Caco-2 (cell line): ENCODE measurements at regions of chr11 and their contacts with region 1.

Region 1: DNA sequence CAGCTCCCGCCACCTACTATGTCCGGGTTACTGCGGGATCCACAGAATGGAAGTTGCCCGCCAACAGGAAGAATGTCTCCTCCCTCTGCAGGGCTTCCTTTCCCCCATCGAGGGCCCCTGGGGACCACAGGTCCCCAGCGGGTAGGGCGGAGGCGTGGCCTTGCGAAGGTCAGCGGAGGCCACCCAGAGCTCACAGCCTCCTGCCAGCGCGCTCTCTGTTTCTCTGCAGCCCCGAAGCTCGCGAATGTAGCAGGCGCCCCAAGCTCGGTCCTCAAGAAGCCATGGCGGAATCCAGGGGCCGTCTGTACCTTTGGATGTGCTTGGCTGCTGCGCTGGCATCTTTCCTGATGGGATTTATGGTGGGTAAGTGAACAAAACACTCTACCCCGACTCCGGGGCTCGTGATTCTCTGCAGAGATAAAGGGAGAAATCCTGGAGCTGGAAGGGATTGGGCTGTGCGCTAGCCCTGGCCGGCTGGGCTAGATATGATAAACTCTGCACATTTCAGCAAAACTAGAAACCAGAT is at the start of gene NAALAD2:
- DNase-seq: peak; percentile 90 to 93
- H3K4me3 ChIP-seq: peak within 1 kb of the TSS; percentile 50
- H3K4me3 Mint-ChIP-seq: peak within 1 kb of the TSS; percentile 77
- H3K27ac Mint-ChIP-seq: peak within 1 kb of the TSS; percentile 59
- H3K4me1 ChIP-seq: peaks cover 53% of the 10 kb centered on the region
- H3K4me1 Mint-ChIP-seq: peaks cover 31% of the 10 kb centered on the region
- H3K27me3 ChIP-seq: no peaks in the 10 kb centered on the region
- H3K27me3 Mint-ChIP-seq: no peaks in the 10 kb centered on the region
- CTCF ChIP-seq: no peak
- total RNA-seq, gene NAALAD2: 139 and 142 TPM in 2 replicates

Region 2: GRCh38 chr11:90124371-90124770 is 10.2 kb before region 1 on chr11:
- CTCF ChIA-PET with region 1: no interaction called
- POLR2A ChIA-PET with region 1: no interaction called
- intact Hi-C with region 1: loop called (anchors 1 kb)
- DNase-seq: no peak
- H3K4me3 ChIP-seq: no peak overlapping the region
- H3K4me3 Mint-ChIP-seq: no peak overlapping the region
- H3K27ac Mint-ChIP-seq: no peak overlapping the region
- H3K4me1 ChIP-seq: peaks cover 20% of the 10 kb centered on the region
- H3K4me1 Mint-ChIP-seq: peaks cover 15% of the 10 kb centered on the region
- H3K27me3 ChIP-seq: no peaks in the 10 kb centered on the region
- H3K27me3 Mint-ChIP-seq: no peaks in the 10 kb centered on the region
- CTCF ChIP-seq: no peak

Region 3: GRCh38 chr11:90148900-90149299 is 14.4 kb after region 1 on chr11:
- CTCF ChIA-PET with region 1: interaction called, 3 read pairs
- POLR2A ChIA-PET with region 1: no interaction called
- intact Hi-C with region 1: loop called (anchors 1 kb)
- DNase-seq: no peak
- H3K4me3 ChIP-seq: no peak overlapping the region
- H3K4me3 Mint-ChIP-seq: no peak overlapping the region
- H3K27ac Mint-ChIP-seq: no peak overlapping the region
- H3K4me1 ChIP-seq: 0 out of 2 replicates have a peak, but pooled peaks cover 8% of the 10 kb centered on the region
- H3K4me1 Mint-ChIP-seq: peaks cover 26% of the 10 kb centered on the region
- H3K27me3 ChIP-seq: no peaks in the 10 kb centered on the region
- H3K27me3 Mint-ChIP-seq: no peaks in the 10 kb centered on the region
- CTCF ChIP-seq: peak in 1 of 2 experiments; percentile 39

Region 4: GRCh38 chr11:90171359-90171758 is 36.8 kb after region 1 on chr11:
- CTCF ChIA-PET with region 1: no interaction called
- POLR2A ChIA-PET with region 1: interaction called, 7 read pairs
- intact Hi-C with region 1: loop called (anchors 1 kb)
- DNase-seq: peak; percentile 83 to 90
- H3K4me3 ChIP-seq: no peak overlapping the region
- H3K4me3 Mint-ChIP-seq: peak overlapping the region; percentile 30
- H3K27ac Mint-ChIP-seq: peak overlapping the region; percentile 91
- H3K4me1 ChIP-seq: peaks cover 72% of the 10 kb centered on the region
- H3K4me1 Mint-ChIP-seq: peaks cover 28% of the 10 kb centered on the region
- H3K27me3 ChIP-seq: no peaks in the 10 kb centered on the region
- H3K27me3 Mint-ChIP-seq: no peaks in the 10 kb centered on the region
- CTCF ChIP-seq: no peak

Region 5: GRCh38 chr11:90192869-90193582 is 58.5 kb after region 1 on chr11:
- CTCF ChIA-PET with region 1: no interaction called
- POLR2A ChIA-PET with region 1: no interaction called
- intact Hi-C with region 1: loop called (anchors 2 kb)
- DNase-seq: no peak
- H3K4me3 ChIP-seq: no peak overlapping the region
- H3K4me3 Mint-ChIP-seq: no peak overlapping the region
- H3K27ac Mint-ChIP-seq: no peak overlapping the region
- H3K4me1 ChIP-seq: peaks cover 26% of the 10 kb centered on the region
- H3K4me1 Mint-ChIP-seq: peaks cover 33% of the 10 kb centered on the region
- H3K27me3 ChIP-seq: no peaks in the 10 kb centered on the region
- H3K27me3 Mint-ChIP-seq: no peaks in the 10 kb centered on the region
- CTCF ChIP-seq: no peak

Region 6: GRCh38 chr11:90220391-90220790 is 85.8 kb after region 1 on chr11:
- CTCF ChIA-PET with region 1: no interaction called
- POLR2A ChIA-PET with region 1: no interaction called
- intact Hi-C with region 1: no loop called
- DNase-seq: no peak
- H3K4me3 ChIP-seq: peak overlapping the region; percentile 79
- H3K4me3 Mint-ChIP-seq: peak overlapping the region; percentile 98
- H3K27ac Mint-ChIP-seq: no peak overlapping the region
- H3K4me1 ChIP-seq: peaks cover 34% of the 10 kb centered on the region
- H3K4me1 Mint-ChIP-seq: peaks cover 36% of the 10 kb centered on the region
- H3K27me3 ChIP-seq: no peaks in the 10 kb centered on the region
- H3K27me3 Mint-ChIP-seq: no peaks in the 10 kb centered on the region
- CTCF ChIP-seq: no peak

Region 7: DNA sequence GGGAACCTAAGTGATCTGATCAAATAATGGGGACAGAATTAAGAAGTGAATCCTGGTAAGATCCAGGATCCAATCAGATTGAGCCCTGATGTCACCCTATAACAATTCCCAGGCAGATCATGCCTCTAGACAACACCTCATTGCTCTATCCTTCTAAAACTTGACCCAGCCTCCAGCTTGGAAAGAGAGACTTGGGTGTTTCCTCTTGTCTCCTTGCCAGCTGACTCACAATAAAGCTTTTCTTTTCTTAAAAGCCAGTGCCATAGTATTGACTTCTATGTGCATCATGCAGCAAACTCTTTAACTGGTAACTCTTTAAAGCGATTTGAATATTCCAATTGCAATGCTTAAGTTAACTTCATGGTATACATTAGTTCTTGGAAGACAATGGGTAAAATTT is 197.9 kb after region 1 on chr11:
- CTCF ChIA-PET with region 1: no interaction called
- POLR2A ChIA-PET with region 1: no interaction called
- intact Hi-C with region 1: no loop called
- DNase-seq: no peak
- H3K4me3 ChIP-seq: no peak overlapping the region
- H3K4me3 Mint-ChIP-seq: no peak overlapping the region
- H3K27ac Mint-ChIP-seq: no peak overlapping the region
- H3K4me1 ChIP-seq: peaks cover 7% of the 10 kb centered on the region; the same call in 1 of the 2 replicates
- H3K4me1 Mint-ChIP-seq: peaks cover 13% of the 10 kb centered on the region
- H3K27me3 ChIP-seq: no peaks in the 10 kb centered on the region
- H3K27me3 Mint-ChIP-seq: no peaks in the 10 kb centered on the region
- CTCF ChIP-seq: no peak

Region 8: DNA sequence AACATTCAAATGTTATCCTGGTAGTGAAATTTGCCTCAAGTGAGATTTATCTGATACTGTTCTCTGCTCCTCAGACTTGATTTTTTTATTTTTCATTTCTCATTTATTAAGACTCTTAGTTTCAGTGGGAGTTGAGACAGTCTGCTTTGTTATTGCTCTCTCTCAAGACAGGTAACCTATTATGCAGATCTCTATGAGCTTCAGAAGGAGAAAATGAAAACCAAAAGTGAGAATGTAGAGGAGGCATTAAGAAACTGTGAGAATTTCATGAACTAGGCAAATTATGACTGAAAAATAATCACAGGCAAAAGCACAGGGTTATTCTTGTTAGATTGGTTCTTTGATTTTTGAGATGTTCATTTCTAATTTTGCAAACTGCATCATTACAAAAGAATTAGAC is 378.3 kb after region 1 on chr11:
- CTCF ChIA-PET with region 1: no interaction called
- POLR2A ChIA-PET with region 1: no interaction called
- intact Hi-C with region 1: no loop called
- DNase-seq: no peak
- H3K4me3 ChIP-seq: no peak overlapping the region
- H3K4me3 Mint-ChIP-seq: no peak overlapping the region
- H3K27ac Mint-ChIP-seq: no peak overlapping the region
- H3K4me1 ChIP-seq: no peaks in the 10 kb centered on the region
- H3K4me1 Mint-ChIP-seq: no peaks in the 10 kb centered on the region
- H3K27me3 ChIP-seq: no peaks in the 10 kb centered on the region
- H3K27me3 Mint-ChIP-seq: peaks cover 3% of the 10 kb centered on the region
- CTCF ChIP-seq: no peak

Region 9: DNA sequence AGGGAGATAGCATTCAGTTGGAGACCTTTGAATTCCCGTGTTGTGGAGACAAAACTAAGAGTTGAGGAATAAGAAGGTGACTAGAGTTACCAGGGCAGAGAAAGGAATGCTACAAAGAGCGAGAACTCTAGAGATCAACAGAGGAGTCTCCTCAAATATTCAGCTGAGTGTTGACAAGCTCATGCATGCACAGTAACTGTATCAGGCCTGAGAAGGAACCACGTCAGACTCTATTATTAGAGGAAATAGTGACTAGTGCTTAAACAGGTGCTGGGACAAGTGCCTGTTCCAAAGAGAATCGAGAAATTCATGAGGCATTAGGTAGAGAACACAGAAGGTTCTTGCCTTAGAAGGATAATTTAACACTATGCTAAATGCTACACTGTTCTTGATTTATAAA is 422.1 kb after region 1 on chr11:
- CTCF ChIA-PET with region 1: no interaction called
- POLR2A ChIA-PET with region 1: no interaction called
- intact Hi-C with region 1: no loop called
- DNase-seq: no peak
- H3K4me3 ChIP-seq: no peak overlapping the region
- H3K4me3 Mint-ChIP-seq: no peak overlapping the region
- H3K27ac Mint-ChIP-seq: no peak overlapping the region
- H3K4me1 ChIP-seq: no peaks in the 10 kb centered on the region
- H3K4me1 Mint-ChIP-seq: no peaks in the 10 kb centered on the region
- H3K27me3 ChIP-seq: no peaks in the 10 kb centered on the region; the same call in 1 of the 2 replicates
- H3K27me3 Mint-ChIP-seq: peaks cover 2% of the 10 kb centered on the region
- CTCF ChIP-seq: no peak